Activated naive CD4-positive, alpha-beta T cell treated with anti-CD3 and anti-CD28 coated beads, Interleukin-2, amount 10 ng/mL, durations not matched to agents 7 days and 5 days (primary cell): ENCODE measurements at regions of chr1 and their contacts with region 1.

Region 1: DNA sequence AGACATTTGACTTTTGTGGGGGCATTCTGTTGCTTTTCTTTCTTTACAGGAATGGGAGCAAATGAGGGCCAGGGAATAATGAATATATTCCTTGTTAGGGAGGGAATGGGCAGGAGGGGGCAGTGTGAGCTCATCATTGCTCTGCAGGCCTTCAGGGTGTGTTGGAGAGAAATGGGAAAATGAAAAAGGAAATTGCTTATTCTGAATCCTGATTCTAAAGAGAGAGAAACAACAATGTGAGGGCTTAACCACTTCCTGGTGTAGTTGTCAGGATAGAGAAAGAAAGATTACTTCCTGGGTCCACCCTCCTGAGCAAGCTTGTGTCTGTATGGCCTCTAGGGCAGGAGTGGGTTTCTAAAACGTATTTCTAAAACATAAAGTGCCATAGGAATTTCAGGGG is 28.3 kb downstream of the VANGL2 start:
- DNase-seq: peak; percentile 53
- H3K4me3 Mint-ChIP-seq: no peak overlapping the region
- H3K27ac Mint-ChIP-seq: peak overlapping the region; percentile 81
- H3K4me1 Mint-ChIP-seq: peaks cover 61% of the 10 kb centered on the region
- H3K27me3 Mint-ChIP-seq: peaks cover 3% of the 10 kb centered on the region

Region 2: DNA sequence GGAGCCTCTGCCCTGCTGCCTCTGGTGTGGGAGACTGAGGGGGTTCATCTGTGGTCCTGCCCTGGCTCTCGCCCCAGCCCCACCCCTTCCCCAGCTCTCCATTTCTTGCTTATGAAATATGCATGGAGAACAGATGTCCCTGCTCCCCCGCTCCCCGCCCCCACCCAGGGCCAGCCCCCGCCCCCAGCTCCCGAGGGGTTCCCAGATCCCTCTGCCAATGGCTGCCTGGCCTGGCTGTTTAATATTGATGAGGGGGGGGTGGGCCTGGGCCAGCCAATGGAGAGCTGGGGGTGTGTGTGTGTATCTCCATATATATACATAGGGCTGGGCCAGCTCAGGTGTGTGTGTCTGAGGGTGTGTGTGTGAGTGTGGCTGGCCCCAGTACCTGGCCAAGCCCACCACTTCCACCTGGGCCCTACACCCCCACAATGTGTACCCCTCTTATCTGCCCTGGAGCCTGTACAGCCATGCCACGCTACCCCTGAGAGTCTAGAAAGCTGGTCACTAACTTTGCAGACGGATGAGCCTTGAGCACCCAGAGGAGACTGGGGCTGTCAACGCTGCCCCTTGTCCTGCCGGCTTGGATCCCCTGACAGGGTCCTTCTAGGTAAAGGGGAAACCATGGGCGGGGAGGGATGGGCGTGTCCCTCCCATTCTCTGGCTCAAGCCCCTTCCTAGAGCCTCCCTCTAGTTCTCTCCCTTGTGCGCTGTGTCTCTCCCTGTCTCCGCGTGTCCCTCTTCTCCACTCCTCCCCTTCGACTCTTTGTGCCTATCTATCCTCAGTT is 61.7 kb before region 1 on chr1 and contains the start of gene NHLH1:
- CTCF ChIA-PET with region 1: no interaction called
- DNase-seq: no peak
- H3K4me3 Mint-ChIP-seq: no peak within 1 kb of the TSS
- H3K27ac Mint-ChIP-seq: no peak within 1 kb of the TSS
- H3K4me1 Mint-ChIP-seq: peaks cover 4% of the 10 kb centered on the region
- H3K27me3 Mint-ChIP-seq: peaks cover 14% of the 10 kb centered on the region

Region 3: GRCh38 chr1:160451119-160451858 is 22.6 kb after region 1 on chr1:
- CTCF ChIA-PET with region 1: interaction called, 14 read pairs
- DNase-seq: no peak
- H3K4me3 Mint-ChIP-seq: no peak overlapping the region
- H3K27ac Mint-ChIP-seq: peak overlapping the region; percentile 64
- H3K4me1 Mint-ChIP-seq: peaks cover 66% of the 10 kb centered on the region
- H3K27me3 Mint-ChIP-seq: no peaks in the 10 kb centered on the region

Region 4: GRCh38 chr1:160471253-160471652 is 42.6 kb after region 1 on chr1:
- CTCF ChIA-PET with region 1: interaction called, 11 read pairs
- DNase-seq: no peak
- H3K4me3 Mint-ChIP-seq: no peak overlapping the region
- H3K27ac Mint-ChIP-seq: no peak overlapping the region
- H3K4me1 Mint-ChIP-seq: peaks cover 17% of the 10 kb centered on the region
- H3K27me3 Mint-ChIP-seq: no peaks in the 10 kb centered on the region

Region 5: DNA sequence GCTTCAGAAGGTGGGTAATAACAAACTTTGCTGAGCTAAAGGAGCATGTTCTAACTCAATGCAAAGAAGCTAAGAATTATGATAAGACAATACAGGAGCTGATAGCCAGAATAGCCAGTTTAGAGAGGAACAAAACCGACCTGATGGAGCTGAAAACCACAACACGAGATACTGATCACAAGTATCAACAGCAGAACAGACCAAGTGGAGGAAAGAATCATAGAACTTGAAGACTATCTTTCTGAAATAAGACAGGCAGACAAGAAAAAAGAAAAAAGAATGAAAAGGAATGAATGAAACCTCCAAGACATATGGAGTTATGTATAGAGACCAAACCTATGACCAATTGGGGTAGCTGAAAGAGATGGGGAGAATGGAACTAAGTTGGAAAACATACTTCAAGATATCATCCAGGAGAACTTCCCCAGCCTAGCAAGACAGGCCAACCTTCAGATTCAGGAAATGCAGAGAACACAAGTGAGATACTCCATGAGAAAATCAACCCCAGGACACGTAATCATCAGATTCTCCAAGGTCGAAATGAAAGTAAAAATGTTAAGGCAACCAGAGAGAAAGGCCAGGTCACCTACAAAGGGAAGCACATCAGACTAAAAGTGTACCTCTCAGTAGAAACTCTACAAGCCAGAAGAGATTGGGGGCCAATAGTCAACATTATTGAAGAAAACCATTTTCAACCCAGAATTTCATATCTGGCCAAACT is 130.2 kb after region 1 on chr1:
- CTCF ChIA-PET with region 1: no interaction called
- DNase-seq: no peak
- H3K4me3 Mint-ChIP-seq: no peak overlapping the region
- H3K27ac Mint-ChIP-seq: no peak overlapping the region
- H3K4me1 Mint-ChIP-seq: peaks cover 41% of the 10 kb centered on the region
- H3K27me3 Mint-ChIP-seq: no peaks in the 10 kb centered on the region